ENCODE measurements at regions of chr3 and their contacts with region 1.

Region 1: GRCh38 chr3:48548729-48549705 is 7.6 kb downstream of the PFKFB4 start:
- DNase-seq: peak; percentile 54
- ATAC-seq: peak; percentile 99
- H3K4me3 ChIP-seq: no peak overlapping the region
- H3K27ac ChIP-seq: no peak overlapping the region
- H3K4me1 ChIP-seq: peaks cover 0 to 6% of the 10 kb centered on the region in 2 experiments; a peak in 1 of 4 replicates
- H3K27me3 ChIP-seq: no peaks in the 10 kb centered on the region
- CTCF ChIP-seq: peak in 2 of 3 experiments; percentile 94 to 98; a peak in 4 of 6 replicates
- POLR2A ChIP-seq: no peak
- RAD21 ChIP-seq: no peak

Region 2: GRCh38 chr3:48023377-48023776 is 525.6 kb before region 1 on chr3:
- CTCF ChIA-PET with region 1: no interaction called
- POLR2A ChIA-PET with region 1: no interaction called
- RAD21 ChIA-PET with region 1: no interaction called
- intact Hi-C with region 1: no loop called
- DNase-seq: no peak
- ATAC-seq: no peak
- H3K4me3 ChIP-seq: no peak overlapping the region
- H3K27ac ChIP-seq: no peak overlapping the region
- H3K4me1 ChIP-seq: peaks cover 9 to 18% of the 10 kb centered on the region in 2 experiments
- H3K27me3 ChIP-seq: no peaks in the 10 kb centered on the region
- CTCF ChIP-seq: no peak
- POLR2A ChIP-seq: no peak
- RAD21 ChIP-seq: no peak

Region 3: DNA sequence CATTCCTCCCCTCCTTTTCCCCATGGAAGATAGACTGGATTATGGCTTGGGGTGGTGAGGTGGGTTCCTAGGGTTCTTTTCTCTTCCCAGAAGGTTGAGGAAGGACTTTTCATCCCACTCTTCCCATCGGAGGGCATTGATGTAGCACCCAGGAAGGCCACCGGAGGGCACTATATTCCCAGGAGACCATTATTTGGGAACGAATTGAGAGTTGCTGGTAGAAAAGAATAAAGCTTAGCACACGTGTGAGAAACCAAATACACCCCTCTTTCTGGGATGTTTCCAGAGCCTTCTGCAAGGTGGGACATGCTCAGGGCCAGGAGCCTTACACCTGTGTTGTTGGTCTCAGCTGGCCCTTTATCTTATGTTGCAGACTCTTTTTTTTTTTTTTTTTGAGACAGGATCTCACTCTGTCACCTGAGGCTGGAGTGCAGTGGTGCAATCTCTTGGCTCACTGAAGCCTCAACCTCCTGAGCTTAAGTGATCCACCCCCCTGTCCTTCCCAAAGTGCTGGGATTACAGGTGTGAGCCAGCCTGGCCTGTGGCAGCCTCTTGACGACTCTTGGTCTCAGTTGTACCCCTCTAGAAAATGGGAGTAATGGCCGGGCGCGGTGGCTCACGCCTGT is 354.5 kb before region 1 on chr3:
- CTCF ChIA-PET with region 1: interaction called, 5 read pairs
- POLR2A ChIA-PET with region 1: no interaction called
- RAD21 ChIA-PET with region 1: no interaction called
- intact Hi-C with region 1: loop called (anchors 1 kb)
- DNase-seq: peak; percentile 48
- ATAC-seq: peak; percentile 90
- H3K4me3 ChIP-seq: no peak overlapping the region
- H3K27ac ChIP-seq: no peak overlapping the region
- H3K4me1 ChIP-seq: peaks cover 5 to 16% of the 10 kb centered on the region in 2 experiments; a peak in 3 of 4 replicates
- H3K27me3 ChIP-seq: no peaks in the 10 kb centered on the region
- CTCF ChIP-seq: peak; percentile 81 to 94 (median 90); a peak in 5 of 6 replicates
- POLR2A ChIP-seq: no peak
- RAD21 ChIP-seq: peak; percentile 87

Region 4: GRCh38 chr3:48273594-48274211 is 275.3 kb before region 1 on chr3:
- CTCF ChIA-PET with region 1: interaction called, 4 read pairs
- POLR2A ChIA-PET with region 1: no interaction called
- RAD21 ChIA-PET with region 1: no interaction called
- intact Hi-C with region 1: loop called (anchors 1 kb)
- DNase-seq: peak; percentile 56
- ATAC-seq: peak; percentile 82
- H3K4me3 ChIP-seq: no peak overlapping the region
- H3K27ac ChIP-seq: no peak overlapping the region
- H3K4me1 ChIP-seq: no peaks in the 10 kb centered on the region
- H3K27me3 ChIP-seq: no peaks in the 10 kb centered on the region
- CTCF ChIP-seq: peak; percentile 82 to 91 (median 84)
- POLR2A ChIP-seq: no peak
- RAD21 ChIP-seq: peak; percentile 89

Region 5: GRCh38 chr3:48465531-48466378 is 83.3 kb before region 1 on chr3:
- CTCF ChIA-PET with region 1: interaction called, 19 read pairs
- POLR2A ChIA-PET with region 1: no interaction called
- RAD21 ChIA-PET with region 1: interaction called, 3 to 6 read pairs
- intact Hi-C with region 1: loop called (anchors 1 kb)
- DNase-seq: peak; percentile 96
- ATAC-seq: peak; percentile 85
- H3K4me3 ChIP-seq: peak overlapping the region; percentile 56 to 60
- H3K27ac ChIP-seq: peak overlapping the region; percentile 98
- H3K4me1 ChIP-seq: peaks cover 16 to 33% of the 10 kb centered on the region in 2 experiments
- H3K27me3 ChIP-seq: no peaks in the 10 kb centered on the region
- CTCF ChIP-seq: peak in 2 of 3 experiments; percentile 62 to 64; a peak in 4 of 6 replicates
- POLR2A ChIP-seq: no peak
- RAD21 ChIP-seq: no peak

Region 6: DNA sequence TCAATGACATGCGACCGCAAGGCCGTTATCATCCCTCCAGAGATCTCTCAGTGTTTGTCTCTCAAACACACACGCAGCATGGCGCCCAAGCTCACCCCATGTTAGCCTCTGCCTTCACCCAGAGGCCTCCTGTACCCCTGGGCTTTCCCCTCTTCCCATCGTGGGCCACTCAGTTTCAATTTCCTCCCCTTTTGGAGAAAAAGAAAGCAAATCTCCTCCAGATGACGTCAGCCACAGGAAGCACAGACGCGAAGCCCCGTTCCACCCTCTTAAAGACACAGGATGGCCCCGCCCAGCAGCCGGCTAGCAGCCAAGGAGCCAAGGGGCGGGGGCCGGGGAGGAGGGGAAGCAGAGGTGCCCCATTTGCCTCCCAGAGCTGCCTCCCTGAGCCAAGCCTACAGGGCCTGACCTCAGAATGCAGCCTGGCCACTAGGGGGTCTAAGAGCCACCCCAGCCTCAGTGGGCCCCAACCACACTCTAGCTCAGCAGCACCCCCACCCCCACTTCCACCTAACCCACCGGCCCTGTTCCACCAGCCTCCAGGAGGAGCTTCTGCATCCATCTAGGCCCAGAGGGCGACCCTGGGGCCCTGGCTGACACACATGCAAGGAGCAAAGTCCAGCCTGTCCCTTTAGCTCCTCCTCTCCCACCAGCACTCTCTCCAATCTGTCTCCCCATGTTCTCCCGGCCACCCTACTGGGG is 76.0 kb before region 1 on chr3:
- CTCF ChIA-PET with region 1: interaction called, 5 read pairs
- POLR2A ChIA-PET with region 1: no interaction called
- RAD21 ChIA-PET with region 1: no interaction called
- intact Hi-C with region 1: loop called (anchors 2 kb)
- DNase-seq: peak; percentile 77
- ATAC-seq: peak; percentile 89
- H3K4me3 ChIP-seq: peak overlapping the region; percentile 65 to 91
- H3K27ac ChIP-seq: peak overlapping the region; percentile 73
- H3K4me1 ChIP-seq: peaks cover 20 to 32% of the 10 kb centered on the region in 2 experiments; a peak in 3 of 4 replicates
- H3K27me3 ChIP-seq: no peaks in the 10 kb centered on the region
- CTCF ChIP-seq: peak in 2 of 3 experiments; percentile 32 to 54; a peak in 2 of 6 replicates
- POLR2A ChIP-seq: peak; percentile 71
- RAD21 ChIP-seq: no peak

Region 7: DNA sequence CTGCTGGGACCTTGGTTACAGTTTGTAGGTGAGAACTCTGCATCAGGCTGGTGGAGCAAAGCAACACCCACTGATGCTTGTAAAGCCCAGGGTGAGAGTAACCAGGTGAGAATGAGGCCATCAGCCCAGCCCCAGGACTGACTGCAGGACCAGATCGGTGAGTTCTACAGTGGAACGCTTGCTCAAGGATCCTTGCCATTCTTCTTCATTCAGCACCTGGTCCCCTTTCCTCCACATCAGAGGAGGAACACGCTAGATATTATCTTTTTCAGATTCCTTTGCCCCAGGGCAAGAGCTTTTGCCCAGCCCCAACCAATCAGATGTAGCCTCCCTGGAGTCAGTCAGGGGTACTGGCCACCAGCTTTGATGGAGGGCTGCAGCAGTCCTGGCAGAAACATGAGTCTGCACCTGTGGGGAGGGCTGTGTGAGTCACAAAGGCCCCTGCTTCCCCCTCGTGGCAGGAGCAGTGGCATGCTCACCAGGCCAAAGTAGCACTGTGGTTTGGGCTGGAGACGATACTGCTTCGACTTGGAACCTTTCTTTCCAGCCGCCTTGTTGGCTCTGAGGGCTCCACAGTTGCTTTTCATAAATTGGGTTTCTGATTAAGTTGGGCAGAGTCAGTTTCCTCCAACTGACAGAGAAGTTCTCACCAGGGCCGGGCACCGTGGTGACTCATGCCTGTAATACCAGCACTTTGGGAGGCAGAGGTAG is 41.5 kb before region 1 on chr3:
- CTCF ChIA-PET with region 1: no interaction called
- POLR2A ChIA-PET with region 1: interaction called, 3 read pairs
- RAD21 ChIA-PET with region 1: no interaction called
- intact Hi-C with region 1: loop called (anchors 5 kb)
- DNase-seq: peak; percentile 87
- ATAC-seq: peak; percentile 87
- H3K4me3 ChIP-seq: peak overlapping the region in 1 of 2 experiments; percentile 32; a peak in 3 of 4 replicates
- H3K27ac ChIP-seq: peak overlapping the region; percentile 80
- H3K4me1 ChIP-seq: peaks cover 51 to 65% of the 10 kb centered on the region in 2 experiments
- H3K27me3 ChIP-seq: no peaks in the 10 kb centered on the region
- CTCF ChIP-seq: peak in 2 of 3 experiments; percentile 57 to 66; a peak in 4 of 6 replicates
- POLR2A ChIP-seq: no peak
- RAD21 ChIP-seq: no peak